ENCODE measurements at regions of chr2 and their contacts with region 1.

Region 1: DNA sequence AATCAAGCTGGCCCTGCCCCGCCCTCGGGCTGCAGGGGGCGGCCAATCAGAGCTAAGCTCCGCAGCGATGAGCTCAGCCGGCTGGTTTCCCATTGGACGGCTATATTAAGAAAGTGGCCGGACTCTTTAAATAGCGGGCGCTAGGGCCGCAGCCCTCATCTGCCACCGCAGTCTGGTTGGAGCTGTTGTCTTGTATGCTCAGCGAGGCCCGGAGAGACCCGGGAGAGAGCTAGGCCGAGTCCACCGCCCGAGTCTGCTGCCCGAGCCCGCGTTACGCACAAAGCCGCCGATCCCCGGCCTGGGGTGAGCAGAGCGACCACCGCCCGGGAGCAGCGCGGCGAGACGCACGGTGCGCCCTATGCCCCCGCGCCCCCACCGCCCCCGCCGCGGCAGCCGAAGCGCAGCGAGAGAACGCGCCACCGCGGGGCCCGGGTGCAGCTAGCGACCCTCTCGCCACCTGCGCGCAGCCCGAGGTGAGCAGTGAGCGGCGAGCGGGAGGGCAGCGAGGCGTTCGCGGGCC is at the start of gene RHOB:
- DNase-seq: peak; percentile 99
- H3K4me3 ChIP-seq: peak within 1 kb of the TSS; percentile 89 to 92
- H3K27ac ChIP-seq: peak within 1 kb of the TSS; percentile 97 to 99
- H3K4me1 ChIP-seq: peaks cover 8% of the 10 kb centered on the region
- H3K27me3 ChIP-seq: no peaks in the 10 kb centered on the region
- CTCF ChIP-seq: peak in 2 of 3 experiments; percentile 7 to 11
- POLR2A ChIP-seq: peak; percentile 96
- total RNA-seq, gene RHOB: 186 to 244 TPM

Region 2: GRCh38 chr2:20611077-20611843 is 164.3 kb after region 1 on chr2:
- intact Hi-C with region 1: loop called (anchors 5 kb)
- DNase-seq: peak; percentile 72
- H3K4me3 ChIP-seq: no peak overlapping the region
- H3K27ac ChIP-seq: peak overlapping the region; percentile 46 to 47
- H3K4me1 ChIP-seq: peaks cover 28% of the 10 kb centered on the region
- H3K27me3 ChIP-seq: no peaks in the 10 kb centered on the region
- CTCF ChIP-seq: no peak
- POLR2A ChIP-seq: no peak

Region 3: DNA sequence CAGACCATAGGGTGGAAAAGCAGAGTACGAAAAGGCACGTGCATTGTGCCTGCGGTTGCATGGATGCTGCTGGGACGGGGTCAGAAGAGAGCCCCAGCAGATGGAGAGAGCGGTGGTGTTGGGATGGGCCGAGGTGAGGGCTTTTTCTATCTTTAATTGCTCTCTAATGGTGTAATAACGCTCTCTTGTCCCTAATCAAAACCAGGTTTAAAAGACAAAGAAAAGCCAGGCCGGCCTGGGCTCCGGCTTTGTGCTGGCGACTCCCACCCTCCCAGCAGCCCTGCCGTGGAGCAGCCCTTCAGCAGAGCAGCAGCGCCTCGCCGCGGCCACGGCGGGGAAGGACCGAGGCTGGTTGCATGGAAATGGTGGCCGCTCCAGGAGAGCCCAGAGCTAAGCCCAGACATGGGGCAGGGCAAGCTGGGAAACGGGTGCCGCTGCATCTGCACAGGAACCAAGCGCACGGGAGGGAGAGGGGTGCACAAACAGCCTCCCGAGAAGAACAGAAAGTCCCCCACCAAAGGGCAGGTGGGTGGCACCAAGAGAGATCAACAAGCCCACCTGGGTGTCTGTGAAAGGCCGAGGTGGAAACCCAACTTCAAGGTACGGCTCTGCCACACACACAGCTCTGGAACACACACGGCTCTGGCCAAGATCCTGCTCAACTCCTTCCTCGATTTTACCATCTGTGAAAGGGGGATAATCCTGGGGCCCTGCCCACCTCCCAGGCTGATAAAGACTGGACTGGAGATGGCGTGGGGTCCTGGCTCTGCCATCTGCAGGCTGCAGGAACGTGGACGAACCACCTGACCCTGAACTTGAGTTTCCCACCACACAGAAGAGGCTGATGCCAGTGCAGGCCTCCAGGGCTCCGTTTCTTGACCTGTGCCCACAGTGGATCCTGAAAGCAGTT is 189.0 kb after region 1 on chr2:
- intact Hi-C with region 1: loop called (anchors 5 kb)
- DNase-seq: peak; percentile 91
- H3K4me3 ChIP-seq: no peak overlapping the region
- H3K27ac ChIP-seq: peak overlapping the region in 1 of 2 donors; percentile 16
- H3K4me1 ChIP-seq: peaks cover 19% of the 10 kb centered on the region
- H3K27me3 ChIP-seq: no peaks in the 10 kb centered on the region
- CTCF ChIP-seq: peak; percentile 78 to 92 (median 83)
- POLR2A ChIP-seq: no peak